Ovary (tissue), 10 donors: ENCODE measurements at regions of chr3 and their contacts with region 1.

Region 1: GRCh38 chr3:168884353-168884903 is 779.1 kb downstream of the MECOM start:
- DNase-seq: no peak
- H3K4me3 ChIP-seq: no peak overlapping the region
- H3K27ac ChIP-seq: no peak overlapping the region
- H3K4me1 ChIP-seq: no peaks in the 10 kb centered on the region
- H3K27me3 ChIP-seq: no peaks in the 10 kb centered on the region
- CTCF ChIP-seq: no peak
- EP300 ChIP-seq: no peak
- POLR2A ChIP-seq: no peak

Region 2: DNA sequence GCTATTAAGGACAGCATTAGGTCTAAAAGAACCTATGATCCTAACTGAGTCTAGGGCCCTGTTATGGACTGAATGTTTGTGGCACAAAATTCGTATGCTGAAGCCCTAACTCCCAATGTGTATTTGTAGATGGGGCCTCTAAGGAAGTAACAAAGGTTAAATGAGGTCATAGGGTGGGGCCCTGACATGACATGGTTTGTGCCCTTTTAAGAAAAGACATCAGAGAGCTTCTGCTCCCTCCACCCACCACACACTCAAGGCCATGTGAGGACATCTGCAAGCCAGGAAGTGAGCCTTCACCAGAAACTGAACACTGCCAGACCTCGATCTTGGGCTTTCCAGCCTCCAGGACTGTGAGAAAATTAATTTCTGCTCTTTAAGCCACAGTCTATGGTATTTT is 1247.9 kb after region 1 on chr3:
- intact Hi-C with region 1: loop called in 1 of 4 experiments (anchors 5 kb)
- DNase-seq: no peak
- H3K4me3 ChIP-seq: no peak overlapping the region
- H3K27ac ChIP-seq: no peak overlapping the region
- H3K4me1 ChIP-seq: no peaks in the 10 kb centered on the region
- H3K27me3 ChIP-seq: no peaks in the 10 kb centered on the region
- CTCF ChIP-seq: no peak
- EP300 ChIP-seq: no peak
- POLR2A ChIP-seq: no peak